Psoas muscle (tissue), 8 donors: ENCODE measurements at regions of chr2 and their contacts with region 1.

Region 1: GRCh38 chr2:23351388-23352141 is 33.4 kb upstream of the KLHL29 start:
- DNase-seq: peak; percentile 91 to 92
- ATAC-seq: peak; percentile 88 to 98 (median 92)
- H3K4me3 ChIP-seq: no peak overlapping the region
- H3K27ac ChIP-seq: peak overlapping the region; percentile 16
- H3K4me1 ChIP-seq: peaks cover 5% of the 10 kb centered on the region
- H3K27me3 ChIP-seq: peaks cover 0 to 2% (median 0%) of the 10 kb centered on the region in 3 donors
- CTCF ChIP-seq: peak; percentile 85

Region 2: GRCh38 chr2:22904126-22904684 is 447.4 kb before region 1 on chr2:
- intact Hi-C with region 1: loop called in 1 of 2 experiments (anchors 5 kb)
- DNase-seq: peak; percentile 18 to 50
- ATAC-seq: no peak
- H3K4me3 ChIP-seq: no peak overlapping the region
- H3K27ac ChIP-seq: no peak overlapping the region
- H3K4me1 ChIP-seq: no peaks in the 10 kb centered on the region
- H3K27me3 ChIP-seq: no peaks in the 10 kb centered on the region
- CTCF ChIP-seq: peak; percentile 40

Region 3: GRCh38 chr2:22991844-22992243 is 359.7 kb before region 1 on chr2:
- intact Hi-C with region 1: loop called in 1 of 2 experiments (anchors 5 kb)
- DNase-seq: no peak
- ATAC-seq: no peak
- H3K4me3 ChIP-seq: no peak overlapping the region
- H3K27ac ChIP-seq: no peak overlapping the region
- H3K4me1 ChIP-seq: no peaks in the 10 kb centered on the region
- H3K27me3 ChIP-seq: no peaks in the 10 kb centered on the region
- CTCF ChIP-seq: peak; percentile 33

Region 4: DNA sequence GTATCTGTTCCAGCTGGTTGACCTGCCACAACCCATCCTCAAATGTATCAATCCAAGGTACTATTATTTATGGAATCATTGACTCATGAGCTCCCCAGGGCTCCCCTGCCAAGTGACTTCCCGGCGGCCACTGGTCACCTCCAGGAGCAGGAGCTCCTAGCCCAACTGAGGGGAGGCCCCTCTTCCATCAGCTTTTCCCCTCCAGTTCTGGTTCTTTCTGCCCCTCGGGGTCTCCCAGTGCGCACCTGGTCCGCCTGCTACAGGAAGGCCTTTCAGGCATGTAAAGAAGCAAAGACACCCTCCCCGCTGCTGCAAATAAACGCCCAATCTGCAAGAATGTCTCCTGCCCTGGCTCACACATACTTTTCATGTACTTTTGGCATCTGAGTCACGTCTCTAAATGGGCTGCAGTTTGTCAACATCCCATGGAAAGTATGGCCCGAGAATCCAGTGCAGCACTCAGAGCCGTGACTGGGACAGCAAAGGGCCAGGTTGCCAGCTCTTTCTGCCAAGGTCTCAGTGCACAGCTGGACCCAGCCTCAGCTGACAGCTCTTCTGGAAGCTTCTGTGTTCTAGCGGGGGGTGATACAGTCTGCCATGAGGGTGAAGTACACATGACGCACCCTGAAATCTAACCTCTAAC is 74.8 kb after region 1 on chr2:
- intact Hi-C with region 1: no loop called
- DNase-seq: peak; percentile 83 to 93
- ATAC-seq: peak; percentile 81 to 87 (median 85)
- H3K4me3 ChIP-seq: no peak overlapping the region
- H3K27ac ChIP-seq: peak overlapping the region; percentile 88
- H3K4me1 ChIP-seq: peaks cover 36% of the 10 kb centered on the region
- H3K27me3 ChIP-seq: no peaks in the 10 kb centered on the region
- CTCF ChIP-seq: no peak